ENCODE measurements at regions of chr9 and their contacts with region 1.

Region 1: DNA sequence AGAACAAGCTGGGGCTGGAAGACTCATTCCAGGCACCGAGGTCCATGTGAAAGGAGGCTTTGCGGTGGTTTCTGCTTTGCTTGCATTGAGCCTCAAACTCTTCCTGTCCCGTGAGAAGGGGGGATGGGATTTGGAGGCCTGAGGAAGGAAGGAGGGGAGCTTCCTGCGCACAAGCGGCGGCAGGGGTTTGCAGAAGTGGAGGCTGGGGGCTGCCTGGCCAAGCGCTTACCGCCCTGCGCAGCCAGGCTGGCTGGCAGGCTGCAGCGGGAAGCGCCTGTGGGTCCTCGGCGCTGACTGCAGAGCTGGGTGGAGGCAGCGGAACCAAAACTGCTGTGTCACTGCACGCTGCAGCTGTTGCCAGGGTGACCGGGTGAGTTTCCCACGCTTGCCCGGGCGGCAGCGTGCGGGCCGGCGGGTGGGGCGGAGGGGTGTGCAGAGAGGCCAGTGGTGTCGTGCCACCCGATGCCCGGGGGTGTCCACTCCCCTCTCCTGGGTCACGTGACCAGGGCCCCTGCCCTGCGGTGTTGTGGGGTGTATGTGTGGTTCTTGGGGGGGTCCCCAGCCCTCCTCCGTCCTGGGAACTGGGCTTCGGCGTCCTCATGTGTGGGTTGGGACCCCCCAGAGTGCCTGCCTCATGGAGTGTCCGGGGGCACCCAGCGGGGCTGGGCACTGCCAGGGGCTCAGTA is 81.0 kb downstream of the RXRA start:
- DNase-seq: peak; percentile 92 to 96
- ATAC-seq: peak; percentile 37 to 65 (median 56)
- H3K4me3 ChIP-seq: peak overlapping the region; percentile 63
- H3K27ac ChIP-seq: peak overlapping the region; percentile 81
- H3K4me1 ChIP-seq: peaks cover 100% of the 10 kb centered on the region
- H3K27me3 ChIP-seq: no peaks in the 10 kb centered on the region
- CTCF ChIP-seq: no peak

Region 2: GRCh38 chr9:134325817-134326723 is 81.2 kb before region 1 on chr9 and contains the start of gene RXRA:
- intact Hi-C with region 1: loop called (anchors 2 to 5 kb)
- DNase-seq: peak; percentile 90 to 95
- ATAC-seq: peak; percentile 54 to 58 (median 56)
- H3K4me3 ChIP-seq: peak within 1 kb of the TSS; percentile 92
- H3K27ac ChIP-seq: peak within 1 kb of the TSS; percentile 98
- H3K4me1 ChIP-seq: peaks cover 39% of the 10 kb centered on the region
- H3K27me3 ChIP-seq: no peaks in the 10 kb centered on the region
- CTCF ChIP-seq: no peak
- total RNA-seq, gene RXRA: 84.3 to 192 (median 147) TPM

Region 3: GRCh38 chr9:134365791-134366688 is 41.2 kb before region 1 on chr9:
- intact Hi-C with region 1: loop called in 1 of 2 experiments (anchors 5 kb)
- DNase-seq: peak; percentile 94 to 96
- ATAC-seq: peak; percentile 77 to 82 (median 78)
- H3K4me3 ChIP-seq: peak overlapping the region; percentile 49
- H3K27ac ChIP-seq: peak overlapping the region; percentile 91
- H3K4me1 ChIP-seq: peaks cover 83% of the 10 kb centered on the region
- H3K27me3 ChIP-seq: no peaks in the 10 kb centered on the region
- CTCF ChIP-seq: no peak

Region 4: GRCh38 chr9:134371731-134372130 is 35.5 kb before region 1 on chr9:
- intact Hi-C with region 1: loop called (anchors 2 to 5 kb)
- DNase-seq: peak; percentile 87 to 95
- ATAC-seq: peak; percentile 38 to 48 (median 42)
- H3K4me3 ChIP-seq: peak overlapping the region; percentile 23
- H3K27ac ChIP-seq: peak overlapping the region; percentile 92
- H3K4me1 ChIP-seq: peaks cover 92% of the 10 kb centered on the region
- H3K27me3 ChIP-seq: no peaks in the 10 kb centered on the region
- CTCF ChIP-seq: no peak

Region 5: DNA sequence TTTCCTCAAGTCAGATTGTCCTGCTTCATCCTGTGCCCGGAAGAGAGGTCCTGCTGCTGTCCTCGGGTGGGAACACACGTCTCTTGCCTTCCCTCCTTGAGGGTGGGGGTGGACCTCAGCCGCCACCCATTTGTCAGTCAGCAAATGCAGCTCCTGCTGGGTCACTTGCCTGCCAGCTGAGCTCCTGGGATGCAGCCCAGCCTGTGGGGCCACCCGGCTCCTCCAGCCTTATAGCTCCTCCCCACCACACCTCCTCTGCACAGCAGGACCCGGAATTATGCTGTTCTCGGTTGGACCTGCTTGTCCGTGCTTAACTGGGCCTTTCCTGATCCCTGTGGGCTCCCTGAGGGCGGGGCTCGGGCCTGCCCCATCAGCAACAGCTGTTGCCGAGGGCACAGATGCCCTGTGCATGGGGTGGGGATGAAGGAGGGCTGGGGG is 28.3 kb before region 1 on chr9:
- intact Hi-C with region 1: loop called (anchors 2 to 5 kb)
- DNase-seq: peak; percentile 82 to 87
- ATAC-seq: peak; percentile 29 to 53 (median 41)
- H3K4me3 ChIP-seq: peak overlapping the region; percentile 49
- H3K27ac ChIP-seq: peak overlapping the region; percentile 92
- H3K4me1 ChIP-seq: peaks cover 100% of the 10 kb centered on the region
- H3K27me3 ChIP-seq: no peaks in the 10 kb centered on the region
- CTCF ChIP-seq: no peak

Region 6: DNA sequence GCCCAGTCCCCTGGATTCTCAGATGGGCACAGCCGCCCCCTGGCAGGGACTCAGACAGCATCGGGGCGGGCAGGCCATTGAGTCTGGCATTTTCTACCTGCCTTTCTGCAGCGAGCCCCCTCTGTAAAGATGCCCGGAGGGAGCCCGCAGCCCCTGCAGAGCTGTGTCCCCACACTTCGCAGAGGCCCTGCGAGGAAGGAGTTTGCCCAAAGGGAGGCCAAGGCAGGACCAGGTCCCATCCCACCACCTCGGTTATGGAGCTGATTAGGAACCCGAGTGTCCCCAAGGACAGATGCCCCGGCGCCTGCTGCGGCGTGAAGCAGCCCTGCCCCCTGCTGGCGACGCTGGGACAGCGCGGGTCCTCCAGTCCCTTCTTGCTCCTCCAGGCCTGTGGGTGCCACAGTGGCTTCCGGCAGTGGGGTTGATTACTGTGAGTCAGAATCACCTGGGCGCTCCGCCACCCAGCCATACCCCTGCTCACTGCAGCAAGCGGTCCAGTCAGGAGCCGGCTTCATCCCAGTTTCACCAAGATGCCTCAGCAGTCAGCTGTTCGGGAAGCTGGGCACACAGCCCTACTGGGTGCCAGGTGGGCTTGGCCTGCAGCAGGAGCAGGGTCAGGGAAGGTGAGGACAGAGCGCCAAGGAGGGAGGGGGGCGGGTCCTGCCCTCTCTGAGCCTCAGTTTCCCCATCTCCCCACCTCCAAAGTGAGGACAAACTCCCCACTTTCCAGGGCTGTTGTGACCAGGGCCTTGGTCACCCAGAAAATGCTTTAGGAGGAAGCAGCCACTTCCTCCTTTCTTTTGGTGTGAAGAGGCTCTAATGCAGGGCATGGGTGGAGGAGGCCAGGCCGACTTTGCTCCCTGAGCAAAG is 36.1 kb after region 1 on chr9:
- intact Hi-C with region 1: loop called in 1 of 2 experiments (anchors 5 kb)
- DNase-seq: peak; percentile 91 to 96
- ATAC-seq: peak; percentile 78 to 87 (median 83)
- H3K4me3 ChIP-seq: no peak overlapping the region
- H3K27ac ChIP-seq: peak overlapping the region; percentile 21
- H3K4me1 ChIP-seq: peaks cover 40% of the 10 kb centered on the region
- H3K27me3 ChIP-seq: no peaks in the 10 kb centered on the region
- CTCF ChIP-seq: peak; percentile 99

Measured in psoas muscle (tissue), 8 donors.